Dendritic cell treated with granulocyte-macrophage colony-stimulating factor and Interleukin-4, amounts not matched to agents 40 ng/mL and 50 ng/mL, for 4 days (primary cell): ENCODE measurements at regions of chr2 and their contacts with region 1.

Region 1: DNA sequence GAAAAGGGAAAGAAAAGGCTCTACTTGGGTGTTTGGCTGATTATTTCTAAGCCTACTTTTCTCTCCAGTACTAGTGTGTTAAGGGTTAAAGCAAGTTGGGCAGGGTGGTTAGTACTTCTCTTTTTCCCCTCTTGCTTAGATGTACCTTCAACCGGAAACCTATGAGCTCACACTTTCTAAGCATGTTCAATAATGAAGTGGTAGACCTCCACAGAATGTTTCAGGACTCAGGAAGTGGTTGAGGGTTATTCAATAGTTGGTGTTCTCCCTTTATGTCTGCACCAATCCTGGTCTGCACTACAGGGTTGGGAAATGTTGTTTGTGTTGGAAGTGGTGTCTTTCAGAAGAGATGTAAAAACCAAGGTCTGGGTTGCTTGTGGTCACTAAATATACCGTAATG is 137.1 kb downstream of the ZEB2 start:
- H3K4me3 Mint-ChIP-seq: no peak overlapping the region
- H3K27ac Mint-ChIP-seq: peak overlapping the region; percentile 40
- H3K4me1 Mint-ChIP-seq: peaks cover 62% of the 10 kb centered on the region
- H3K27me3 Mint-ChIP-seq: no peaks in the 10 kb centered on the region

Region 2: DNA sequence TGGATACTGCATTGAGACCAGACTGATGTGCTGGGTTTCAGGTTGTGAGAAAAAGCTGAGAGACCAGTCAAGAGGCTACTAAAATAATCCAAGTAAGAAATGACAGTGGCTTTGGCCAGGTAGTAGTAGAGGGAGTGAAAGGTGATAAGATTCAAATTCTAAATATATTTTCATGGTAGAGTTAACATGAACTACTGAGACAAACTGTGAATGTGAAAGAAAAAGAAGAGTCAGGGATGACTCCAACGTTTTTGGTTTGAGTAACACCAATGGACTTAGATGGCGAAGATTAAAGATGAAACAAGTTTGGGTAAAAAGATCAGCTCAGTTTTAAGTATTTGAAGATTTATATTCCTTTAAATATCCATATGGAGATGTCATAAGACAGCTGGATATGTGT is 72.4 kb before region 1 on chr2:
- intact Hi-C with region 1: no loop called
- H3K4me3 Mint-ChIP-seq: no peak overlapping the region
- H3K27ac Mint-ChIP-seq: no peak overlapping the region
- H3K4me1 Mint-ChIP-seq: no peaks in the 10 kb centered on the region
- H3K27me3 Mint-ChIP-seq: no peaks in the 10 kb centered on the region

Region 3: GRCh38 chr2:144332356-144333142 is 50.3 kb before region 1 on chr2:
- intact Hi-C with region 1: loop called (anchors 5 kb)
- H3K4me3 Mint-ChIP-seq: peak overlapping the region; percentile 89
- H3K27ac Mint-ChIP-seq: peak overlapping the region; percentile 88
- H3K4me1 Mint-ChIP-seq: peaks cover 19% of the 10 kb centered on the region
- H3K27me3 Mint-ChIP-seq: peaks cover 9% of the 10 kb centered on the region

Region 4: DNA sequence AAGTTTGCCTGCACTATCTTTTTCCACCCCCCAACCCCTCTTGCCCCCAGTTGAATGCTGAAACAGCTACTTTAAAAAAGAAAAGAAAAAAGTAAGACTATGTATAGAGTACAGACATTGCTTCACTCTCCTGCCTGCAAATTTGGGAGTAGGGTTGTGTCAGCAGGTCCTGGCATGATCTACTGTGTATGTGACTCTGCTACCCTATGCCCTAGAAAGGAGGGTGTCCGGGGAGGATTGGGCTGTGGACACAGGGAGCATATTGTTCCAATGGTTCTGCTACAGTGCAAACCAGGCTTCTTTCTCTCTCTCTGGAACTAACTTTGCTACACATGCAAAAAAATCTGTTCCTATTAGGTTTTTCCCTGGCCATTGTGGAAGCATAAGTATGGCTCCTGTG is 147.0 kb after region 1 on chr2:
- intact Hi-C with region 1: no loop called
- H3K4me3 Mint-ChIP-seq: no peak overlapping the region
- H3K27ac Mint-ChIP-seq: no peak overlapping the region
- H3K4me1 Mint-ChIP-seq: peaks cover 15% of the 10 kb centered on the region
- H3K27me3 Mint-ChIP-seq: no peaks in the 10 kb centered on the region